AG04450 (cell line): ENCODE measurements at regions of chr1 and their contacts with region 1.

Region 1: GRCh38 chr1:240058049-240058448 is 33.6 kb upstream of the FMN2 start:
- DNase-seq: no peak
- H3K4me3 ChIP-seq: no peak overlapping the region
- H3K27ac ChIP-seq: no peak overlapping the region
- H3K27me3 ChIP-seq: no peaks in the 10 kb centered on the region
- CTCF ChIP-seq: no peak

Region 2: GRCh38 chr1:240027059-240027462 is 31.0 kb before region 1 on chr1:
- CTCF ChIA-PET with region 1: interaction called, 11 read pairs
- POLR2A ChIA-PET with region 1: no interaction called
- DNase-seq: no peak
- H3K4me3 ChIP-seq: no peak overlapping the region
- H3K27ac ChIP-seq: no peak overlapping the region
- H3K27me3 ChIP-seq: no peaks in the 10 kb centered on the region
- CTCF ChIP-seq: peak; percentile 99

Region 3: DNA sequence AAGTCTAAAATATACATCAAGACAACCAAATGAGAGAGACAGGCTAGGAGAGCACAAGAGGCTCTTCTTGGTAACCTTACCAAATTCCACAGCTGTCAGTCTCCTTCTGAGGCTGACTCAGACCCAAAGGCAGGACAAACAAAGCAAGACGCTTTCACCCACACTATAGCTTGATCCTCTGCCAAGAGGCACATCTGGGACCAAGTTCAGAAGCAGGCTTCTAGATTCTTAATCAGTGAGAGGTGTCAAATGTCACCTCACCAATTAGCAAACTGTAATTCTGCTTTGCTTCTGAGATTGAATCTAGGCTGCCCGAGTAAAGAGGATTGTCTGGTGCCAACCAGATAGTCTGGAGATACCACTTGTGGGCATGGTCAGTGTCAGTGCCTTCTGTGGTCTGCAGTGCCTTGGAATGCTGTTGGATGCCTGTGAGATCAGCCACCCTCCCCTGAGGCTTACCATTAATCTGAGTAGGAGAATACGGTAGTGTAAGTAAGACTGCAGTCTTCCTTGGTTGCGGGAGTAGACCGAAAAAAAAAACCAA is 184.6 kb after region 1 on chr1:
- CTCF ChIA-PET with region 1: no interaction called
- POLR2A ChIA-PET with region 1: no interaction called
- DNase-seq: peak; percentile 51
- H3K4me3 ChIP-seq: no peak overlapping the region
- H3K27ac ChIP-seq: peak overlapping the region; percentile 60
- H3K27me3 ChIP-seq: no peaks in the 10 kb centered on the region
- CTCF ChIP-seq: no peak